Right lobe of liver (tissue), 6 donors: ENCODE measurements at regions of chr10 and their contacts with region 1.

Region 1: GRCh38 chr10:13659897-13660550 is 73.3 kb downstream of the PRPF18 start:
- DNase-seq: peak in 2 of 3 donors; percentile 62 to 69
- ATAC-seq: peak; percentile 67 to 80 (median 76)
- H3K4me3 ChIP-seq: no peak overlapping the region
- H3K27ac ChIP-seq: no peak overlapping the region
- H3K4me1 ChIP-seq: peaks cover 0 to 3% (median 0%) of the 10 kb centered on the region in 4 donors
- H3K27me3 ChIP-seq: no peaks in the 10 kb centered on the region
- CTCF ChIP-seq: peak; percentile 88 to 93 (median 90)
- POLR2A ChIP-seq: no peak

Region 2: DNA sequence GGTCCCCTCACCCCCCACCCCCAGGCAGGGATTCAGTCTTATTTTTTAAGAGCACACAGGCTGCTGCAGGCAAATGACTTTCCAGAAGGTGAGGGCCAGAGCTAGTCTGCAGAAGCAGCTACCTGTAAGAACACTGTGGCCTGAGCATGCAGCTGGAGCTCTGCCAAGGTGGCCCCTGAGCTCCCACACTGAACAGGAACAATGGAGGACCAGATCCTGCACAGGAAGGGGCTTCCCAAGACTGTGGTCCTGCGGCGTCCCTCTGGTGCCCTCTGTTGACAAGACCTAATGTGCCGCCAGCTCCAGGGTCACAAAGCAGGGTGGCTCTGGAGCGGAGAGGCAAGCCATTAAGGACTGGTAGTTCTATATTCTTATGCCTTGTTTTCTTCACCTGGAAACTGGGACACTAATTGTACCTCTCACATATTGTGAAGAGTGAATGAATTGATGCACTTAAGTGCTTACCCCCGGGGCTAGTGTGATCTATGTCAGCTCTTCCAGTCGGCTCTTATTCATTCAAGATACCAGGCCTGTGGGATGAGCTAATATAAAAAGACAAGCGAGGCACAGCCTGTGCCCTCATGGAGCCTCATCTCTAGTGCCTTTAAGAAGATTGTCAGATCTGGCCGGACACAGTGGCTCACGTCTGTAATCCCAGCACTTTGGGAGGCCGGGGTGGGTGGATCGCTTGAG is 123.2 kb before region 1 on chr10:
- intact Hi-C with region 1: no loop called
- DNase-seq: peak; percentile 60 to 70 (median 60)
- ATAC-seq: peak; percentile 89 to 97 (median 92)
- H3K4me3 ChIP-seq: no peak overlapping the region
- H3K27ac ChIP-seq: no peak overlapping the region
- H3K4me1 ChIP-seq: no peaks in the 10 kb centered on the region
- H3K27me3 ChIP-seq: no peaks in the 10 kb centered on the region
- CTCF ChIP-seq: peak; percentile 41 to 71 (median 68)
- POLR2A ChIP-seq: no peak

Region 3: GRCh38 chr10:13776861-13777311 is 116.9 kb after region 1 on chr10:
- intact Hi-C with region 1: loop called (anchors 5 kb)
- DNase-seq: no peak
- ATAC-seq: peak in 2 of 4 donors; percentile 16 to 25
- H3K4me3 ChIP-seq: no peak overlapping the region
- H3K27ac ChIP-seq: no peak overlapping the region
- H3K4me1 ChIP-seq: no peaks in the 10 kb centered on the region
- H3K27me3 ChIP-seq: no peaks in the 10 kb centered on the region
- CTCF ChIP-seq: no peak
- POLR2A ChIP-seq: no peak

Region 4: DNA sequence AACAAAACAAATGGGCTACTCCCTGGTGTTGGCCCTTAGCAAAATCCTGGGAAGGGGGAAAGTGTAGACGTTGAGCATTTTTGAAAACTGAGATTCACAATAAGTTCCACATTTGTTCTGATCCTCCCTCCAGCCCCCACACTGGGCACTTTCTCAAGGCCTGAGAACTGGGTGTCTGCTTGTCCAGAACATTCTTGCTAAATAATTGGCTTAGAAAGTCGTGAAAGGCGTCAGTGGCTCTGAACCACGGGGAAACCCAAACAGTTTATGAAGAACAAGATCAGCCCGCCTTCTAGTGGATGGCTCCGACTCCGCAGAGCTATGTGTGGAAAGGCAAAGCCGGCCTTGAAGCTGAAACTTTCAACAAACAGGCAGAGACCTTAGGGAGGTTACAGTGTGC is 296.8 kb after region 1 on chr10:
- intact Hi-C with region 1: no loop called
- DNase-seq: no peak
- ATAC-seq: peak; percentile 23 to 45 (median 30)
- H3K4me3 ChIP-seq: no peak overlapping the region
- H3K27ac ChIP-seq: no peak overlapping the region
- H3K4me1 ChIP-seq: no peaks in the 10 kb centered on the region
- H3K27me3 ChIP-seq: no peaks in the 10 kb centered on the region
- CTCF ChIP-seq: peak in 3 of 4 donors; percentile 7 to 19 (median 13)
- POLR2A ChIP-seq: no peak